AG04450 (cell line): ENCODE measurements at regions of chr5 and their contacts with region 1.

Region 1: DNA sequence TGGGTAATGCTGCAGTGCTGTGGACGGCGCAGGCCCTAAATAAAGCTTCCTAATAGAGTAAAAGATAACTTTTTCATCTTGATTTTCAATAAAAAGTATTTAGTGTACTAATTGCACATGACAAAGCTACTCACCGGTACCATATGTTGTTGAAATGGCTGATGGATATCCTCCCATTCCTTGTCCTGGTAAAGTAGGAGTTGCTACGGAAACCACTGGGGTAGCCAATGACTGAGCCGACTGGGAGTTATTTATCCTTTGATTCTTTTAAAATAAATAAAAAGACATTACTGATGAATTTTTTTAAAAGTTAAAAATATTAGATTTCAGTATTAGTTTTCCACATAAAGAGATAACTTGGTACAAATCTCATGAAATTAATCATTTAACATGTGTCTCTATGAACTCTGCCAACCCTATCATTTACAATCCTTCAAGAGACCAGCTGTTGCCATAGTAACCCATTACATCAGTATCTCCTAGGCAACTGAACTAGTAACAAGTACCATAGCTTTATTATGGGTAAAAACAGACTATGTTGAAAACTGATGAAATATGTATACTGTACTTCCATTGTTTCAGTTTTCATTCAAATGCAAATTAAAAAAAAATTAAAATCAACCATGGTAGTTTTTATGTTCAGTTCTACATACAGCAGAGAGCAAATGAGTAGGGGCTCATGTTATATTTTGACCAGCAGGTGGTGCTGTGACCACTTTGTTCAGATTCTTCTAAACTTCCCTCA is 153.7 kb downstream of the MEF2C start:
- DNase-seq: peak; percentile 59
- H3K4me3 ChIP-seq: no peak overlapping the region
- H3K27ac ChIP-seq: no peak overlapping the region
- H3K27me3 ChIP-seq: no peaks in the 10 kb centered on the region
- CTCF ChIP-seq: peak; percentile 73

Region 2: GRCh38 chr5:88298425-88298824 is 430.8 kb before region 1 on chr5:
- CTCF ChIA-PET with region 1: no interaction called
- POLR2A ChIA-PET with region 1: no interaction called
- DNase-seq: peak; percentile 18
- H3K4me3 ChIP-seq: no peak overlapping the region
- H3K27ac ChIP-seq: no peak overlapping the region
- H3K27me3 ChIP-seq: no peaks in the 10 kb centered on the region
- CTCF ChIP-seq: no peak

Region 3: DNA sequence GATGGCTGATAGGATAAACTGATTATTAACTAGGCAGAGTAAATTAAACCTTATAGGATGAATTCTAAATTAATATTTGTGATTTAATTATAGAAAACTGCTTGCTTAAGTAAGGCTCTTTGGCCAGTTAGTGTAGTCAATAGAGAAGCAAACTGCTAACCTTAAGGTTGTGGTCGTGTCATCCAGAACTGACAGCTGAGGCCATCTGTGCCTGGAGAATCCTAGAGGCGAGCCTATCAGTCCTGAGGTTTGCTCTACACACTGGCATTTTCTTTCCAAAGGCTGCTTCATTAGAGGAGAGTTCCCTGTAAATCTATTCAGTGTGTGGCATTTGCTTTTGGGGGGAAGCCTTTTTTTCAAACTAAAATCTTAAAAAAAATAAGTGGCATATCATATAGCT is 15.4 kb before region 1 on chr5:
- CTCF ChIA-PET with region 1: interaction called, 19 read pairs
- POLR2A ChIA-PET with region 1: no interaction called
- DNase-seq: no peak
- H3K4me3 ChIP-seq: no peak overlapping the region
- H3K27ac ChIP-seq: no peak overlapping the region
- H3K27me3 ChIP-seq: no peaks in the 10 kb centered on the region
- CTCF ChIP-seq: no peak

Region 4: DNA sequence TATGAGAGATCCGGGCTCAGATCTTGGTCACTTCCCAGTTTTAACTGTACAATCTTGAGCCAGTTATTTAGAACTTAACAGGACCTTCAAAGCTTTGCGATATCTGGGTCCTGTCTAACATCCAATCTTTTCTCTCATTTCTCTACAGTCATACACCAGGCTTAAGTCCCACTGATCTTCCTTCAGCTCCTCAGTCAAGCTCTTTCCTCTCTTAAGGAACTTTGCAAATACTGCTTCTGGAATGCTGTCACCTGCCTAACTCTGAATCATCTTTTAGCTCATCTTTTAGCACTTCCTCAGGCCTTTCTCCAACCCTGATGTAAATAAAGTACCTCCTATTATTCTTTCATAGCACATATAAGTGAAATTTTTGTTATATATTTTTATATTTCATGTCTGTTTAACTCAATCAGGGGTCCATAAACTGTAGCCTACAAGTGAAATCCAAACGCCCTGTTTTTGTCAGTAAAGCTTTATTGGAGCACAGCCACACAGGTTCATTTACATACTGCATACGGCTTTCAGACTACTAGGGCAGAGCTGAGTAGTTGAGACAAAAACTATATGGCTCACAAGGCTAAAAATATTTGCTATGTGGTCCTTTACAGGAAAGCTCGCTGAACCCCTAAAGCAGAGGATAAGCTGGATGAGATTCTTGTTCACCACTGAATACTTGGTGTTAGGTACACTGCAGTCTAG is 90.2 kb after region 1 on chr5:
- CTCF ChIA-PET with region 1: interaction called, 10 read pairs
- POLR2A ChIA-PET with region 1: no interaction called
- DNase-seq: no peak
- H3K4me3 ChIP-seq: no peak overlapping the region
- H3K27ac ChIP-seq: no peak overlapping the region
- H3K27me3 ChIP-seq: no peaks in the 10 kb centered on the region
- CTCF ChIP-seq: no peak

Region 5: GRCh38 chr5:88883059-88883835 is 154.0 kb after region 1 on chr5 and contains the start of gene MEF2C:
- CTCF ChIA-PET with region 1: interaction called, 35 read pairs
- POLR2A ChIA-PET with region 1: interaction called, 4 read pairs
- DNase-seq: peak; percentile 49
- H3K4me3 ChIP-seq: peak within 1 kb of the TSS; percentile 71
- H3K27ac ChIP-seq: peak within 1 kb of the TSS; percentile 78
- H3K27me3 ChIP-seq: no peaks in the 10 kb centered on the region
- CTCF ChIP-seq: no peak
- polyA plus RNA-seq, gene MEF2C: 2.0 and 3.9 TPM in 2 replicates

Region 6: GRCh38 chr5:89729623-89730301 is 1000.5 kb after region 1 on chr5:
- CTCF ChIA-PET with region 1: interaction called, 52 read pairs
- POLR2A ChIA-PET with region 1: no interaction called
- DNase-seq: no peak
- H3K4me3 ChIP-seq: no peak overlapping the region
- H3K27ac ChIP-seq: no peak overlapping the region
- H3K27me3 ChIP-seq: no peaks in the 10 kb centered on the region
- CTCF ChIP-seq: peak; percentile 33; the same call in 1 of the 2 replicates

Region 7: DNA sequence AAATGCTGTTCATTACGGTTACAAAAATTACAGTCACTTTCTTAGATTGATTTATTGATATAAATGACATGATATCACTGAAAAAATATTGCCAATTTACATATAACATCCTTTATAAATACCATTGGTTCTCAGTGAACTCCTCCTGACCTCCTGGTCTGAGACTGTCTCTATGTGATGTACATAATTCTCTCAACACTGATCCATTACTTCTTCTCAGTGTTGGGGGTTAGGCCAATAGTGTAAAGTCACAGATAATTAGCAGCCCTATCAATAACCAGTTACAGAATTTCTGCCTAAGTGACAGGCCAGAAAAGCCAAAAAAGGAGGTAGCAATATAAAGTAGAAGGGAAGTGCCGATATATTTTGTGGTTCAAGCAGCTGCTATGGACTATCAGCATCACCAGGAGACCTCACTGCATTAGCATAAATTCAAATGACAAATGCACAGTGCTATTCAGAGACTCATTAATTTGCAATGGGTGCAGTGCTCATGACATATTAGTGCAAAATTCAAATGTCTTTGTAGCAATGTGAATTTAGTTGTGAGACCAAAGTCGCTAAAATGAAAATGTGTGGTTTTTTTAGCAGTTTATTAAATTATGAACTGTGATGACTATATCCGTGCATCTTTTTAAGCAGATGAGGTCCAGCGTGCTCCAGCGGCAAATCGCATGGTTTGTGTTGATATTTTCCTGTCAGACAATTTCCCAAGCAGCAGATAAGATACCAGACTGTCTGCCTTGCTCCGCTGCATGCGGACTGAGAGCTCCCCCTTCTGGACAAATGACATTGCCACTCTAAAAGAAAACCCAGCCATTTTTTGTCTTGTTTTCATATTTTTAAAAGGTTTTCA is 1535.7 kb after region 1 on chr5:
- CTCF ChIA-PET with region 1: interaction called, 220 read pairs
- POLR2A ChIA-PET with region 1: no interaction called
- DNase-seq: peak; percentile 33
- H3K4me3 ChIP-seq: no peak overlapping the region
- H3K27ac ChIP-seq: no peak overlapping the region
- H3K27me3 ChIP-seq: no peaks in the 10 kb centered on the region
- CTCF ChIP-seq: peak; percentile 99